ENCODE measurements at regions of chr11 and their contacts with region 1.

Region 1: DNA sequence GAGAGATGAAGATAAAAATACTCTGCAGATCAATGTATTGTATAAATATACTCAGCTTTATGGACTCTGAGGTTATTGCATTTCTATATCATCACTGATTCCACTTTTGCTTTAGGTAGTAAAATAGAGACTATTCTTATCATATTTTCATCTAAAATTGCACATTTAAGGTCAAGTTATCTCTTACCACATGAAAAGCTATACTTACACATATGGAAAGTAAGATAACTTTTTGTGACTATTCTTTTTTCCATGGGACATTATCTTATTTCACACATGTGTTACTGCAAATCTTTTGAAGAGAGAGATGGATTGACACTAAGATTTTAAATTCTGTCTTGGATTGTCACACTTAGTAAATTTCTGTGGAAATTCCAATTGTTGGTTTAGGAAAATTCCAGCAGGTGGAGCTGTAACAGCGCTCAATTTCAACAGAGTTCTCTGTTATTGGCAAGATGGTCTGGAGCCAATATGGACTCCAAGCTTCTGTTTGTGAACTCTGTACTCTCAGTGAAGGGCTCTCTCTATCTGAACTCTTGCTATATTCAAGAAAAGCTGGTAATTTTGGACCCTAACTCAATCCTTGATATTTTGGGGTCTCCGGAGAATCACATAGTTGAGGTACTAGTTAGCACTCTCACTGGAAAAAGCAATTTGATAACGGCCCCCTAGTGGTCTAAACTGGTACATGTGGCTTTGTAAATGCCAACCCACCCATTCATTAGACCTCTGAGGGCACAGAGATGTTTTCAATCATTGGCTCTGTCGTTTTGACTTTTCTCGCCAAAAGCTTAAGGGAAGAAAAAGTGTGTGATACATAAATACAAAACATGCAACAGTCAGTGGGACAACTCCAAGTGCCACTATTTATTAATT is 429.7 kb downstream of the ETS1 start:
- DNase-seq: peak; percentile 25 to 73 (median 64)
- H3K4me3 ChIP-seq: peak overlapping the region; percentile 54
- H3K4me3 Mint-ChIP-seq: peak overlapping the region; percentile 44 to 92 (median 86)
- H3K27ac ChIP-seq: no peak overlapping the region
- H3K27ac Mint-ChIP-seq: peak overlapping the region in 6 of 8 donors; percentile 47 to 86 (median 74)
- H3K4me1 ChIP-seq: no peaks in the 10 kb centered on the region
- H3K4me1 Mint-ChIP-seq: peaks cover 6 to 10% (median 8%) of the 10 kb centered on the region in 3 donors
- H3K27me3 ChIP-seq: no peaks in the 10 kb centered on the region
- H3K27me3 Mint-ChIP-seq: peaks cover 0 to 1% of the 10 kb centered on the region in 2 donors

Region 2: GRCh38 chr11:128026596-128026995 is 131.1 kb before region 1 on chr11:
- CTCF ChIA-PET with region 1: interaction called, 43 read pairs
- POLR2A ChIA-PET with region 1: no interaction called
- DNase-seq: no peak
- H3K4me3 ChIP-seq: no peak overlapping the region
- H3K4me3 Mint-ChIP-seq: no peak overlapping the region
- H3K27ac ChIP-seq: no peak overlapping the region
- H3K27ac Mint-ChIP-seq: no peak overlapping the region
- H3K4me1 ChIP-seq: peaks cover 4% of the 10 kb centered on the region
- H3K4me1 Mint-ChIP-seq: peaks cover 0 to 3% (median 3%) of the 10 kb centered on the region in 3 donors
- H3K27me3 ChIP-seq: no peaks in the 10 kb centered on the region
- H3K27me3 Mint-ChIP-seq: peaks cover 0 to 12% of the 10 kb centered on the region in 2 donors

Region 3: GRCh38 chr11:128045094-128045725 is 112.5 kb before region 1 on chr11:
- CTCF ChIA-PET with region 1: interaction called, 69 read pairs
- POLR2A ChIA-PET with region 1: interaction called, 10 read pairs
- DNase-seq: no peak
- H3K4me3 ChIP-seq: no peak overlapping the region
- H3K4me3 Mint-ChIP-seq: peak overlapping the region in 6 of 7 donors; percentile 2 to 66 (median 37)
- H3K27ac ChIP-seq: no peak overlapping the region
- H3K27ac Mint-ChIP-seq: peak overlapping the region in 7 of 8 donors; percentile 35 to 78 (median 47)
- H3K4me1 ChIP-seq: peaks cover 61% of the 10 kb centered on the region
- H3K4me1 Mint-ChIP-seq: peaks cover 67 to 78% (median 77%) of the 10 kb centered on the region in 3 donors
- H3K27me3 ChIP-seq: no peaks in the 10 kb centered on the region
- H3K27me3 Mint-ChIP-seq: peaks cover 0 to 2% of the 10 kb centered on the region in 2 donors

Region 4: DNA sequence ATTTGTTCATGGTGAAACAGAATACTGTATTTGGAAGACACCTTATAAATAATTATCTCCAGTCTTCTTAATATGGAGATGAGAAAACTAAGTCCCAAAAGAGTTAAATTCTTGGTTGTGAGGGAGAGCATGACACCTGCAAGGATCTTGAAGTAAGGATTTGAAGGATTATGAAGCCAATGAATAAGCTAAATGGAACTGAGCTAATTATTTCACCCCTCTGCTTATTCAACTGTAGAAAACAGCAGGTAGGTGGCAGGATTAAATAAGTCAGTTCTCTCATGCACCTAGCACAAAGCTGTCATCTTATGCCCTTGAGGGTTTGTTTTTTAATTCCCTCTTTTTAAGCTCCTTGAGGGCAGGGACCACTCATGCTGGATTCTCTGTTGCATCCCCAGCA is 27.6 kb before region 1 on chr11:
- CTCF ChIA-PET with region 1: interaction called, 10 read pairs
- POLR2A ChIA-PET with region 1: no interaction called
- DNase-seq: no peak
- H3K4me3 ChIP-seq: no peak overlapping the region
- H3K4me3 Mint-ChIP-seq: no peak overlapping the region
- H3K27ac ChIP-seq: no peak overlapping the region
- H3K27ac Mint-ChIP-seq: no peak overlapping the region
- H3K4me1 ChIP-seq: no peaks in the 10 kb centered on the region
- H3K4me1 Mint-ChIP-seq: peaks cover 3 to 18% (median 9%) of the 10 kb centered on the region in 3 donors
- H3K27me3 ChIP-seq: no peaks in the 10 kb centered on the region
- H3K27me3 Mint-ChIP-seq: no peaks in the 10 kb centered on the region

Region 5: DNA sequence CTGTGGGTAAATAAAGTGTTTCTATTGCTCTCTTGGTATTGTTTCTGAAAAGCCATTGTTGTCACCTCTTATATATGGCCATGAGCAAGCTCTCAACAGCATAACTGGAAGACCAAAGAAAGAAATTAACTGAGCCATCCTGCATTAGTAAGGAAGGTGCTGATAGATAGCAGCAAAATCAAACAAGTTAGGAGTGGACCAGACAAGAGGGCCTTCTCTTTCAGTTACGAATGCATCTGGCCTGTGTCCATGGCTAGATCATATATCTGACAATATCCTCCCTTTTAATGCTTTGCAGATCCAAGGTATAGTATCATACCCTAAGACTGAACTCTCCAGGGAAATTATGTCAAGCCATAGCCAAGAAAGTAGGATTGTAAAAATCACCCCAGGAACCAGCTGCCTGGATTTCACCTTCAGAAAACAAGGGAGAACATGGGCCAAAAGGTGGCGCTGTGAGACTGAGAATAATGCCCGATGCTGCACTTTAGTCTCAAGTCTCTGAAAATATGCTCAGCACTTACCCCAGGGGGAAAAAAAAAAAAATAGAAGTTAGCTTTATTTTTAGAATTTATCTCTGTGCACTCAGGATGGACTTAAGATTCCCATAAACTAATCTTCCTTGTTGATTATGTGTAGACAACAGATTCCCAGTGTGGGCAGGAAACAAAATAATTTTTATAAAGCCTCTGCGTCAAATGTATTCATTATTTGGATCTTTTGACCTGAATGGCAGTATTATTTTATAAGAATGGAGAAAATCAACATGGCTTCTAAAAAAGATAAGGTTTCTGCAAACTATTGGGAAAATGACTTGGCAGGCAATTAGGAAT is 14.6 kb after region 1 on chr11:
- CTCF ChIA-PET with region 1: interaction called, 28 read pairs
- POLR2A ChIA-PET with region 1: no interaction called
- DNase-seq: peak; percentile 67 to 86 (median 76)
- H3K4me3 ChIP-seq: no peak overlapping the region
- H3K4me3 Mint-ChIP-seq: no peak overlapping the region
- H3K27ac ChIP-seq: no peak overlapping the region
- H3K27ac Mint-ChIP-seq: peak overlapping the region in 2 of 8 donors; percentile 57 to 90
- H3K4me1 ChIP-seq: no peaks in the 10 kb centered on the region
- H3K4me1 Mint-ChIP-seq: peaks cover 0 to 6% (median 3%) of the 10 kb centered on the region in 3 donors
- H3K27me3 ChIP-seq: no peaks in the 10 kb centered on the region
- H3K27me3 Mint-ChIP-seq: no peaks in the 10 kb centered on the region

Region 6: DNA sequence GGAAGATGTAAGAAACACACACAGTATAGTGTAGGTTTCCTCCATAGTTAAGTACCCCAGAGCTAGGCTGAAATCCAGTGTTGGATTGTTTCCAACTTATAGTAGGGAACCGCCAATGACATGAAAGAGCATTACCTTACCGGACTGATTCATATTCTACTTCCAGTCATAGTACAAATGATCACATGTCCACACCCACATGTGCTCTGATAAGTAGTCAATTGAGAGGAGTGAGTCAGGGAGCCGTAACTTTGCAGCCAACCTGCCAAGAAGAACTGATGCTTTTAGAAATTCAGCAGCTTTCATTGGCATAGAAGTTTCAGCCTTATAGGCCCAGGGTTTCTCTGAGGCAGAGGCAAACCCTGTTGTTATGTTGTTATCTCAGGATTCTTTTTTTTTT is 189.1 kb after region 1 on chr11:
- CTCF ChIA-PET with region 1: no interaction called
- POLR2A ChIA-PET with region 1: no interaction called
- DNase-seq: no peak
- H3K4me3 ChIP-seq: no peak overlapping the region
- H3K4me3 Mint-ChIP-seq: peak overlapping the region in 1 of 7 donors; percentile 15
- H3K27ac ChIP-seq: no peak overlapping the region
- H3K27ac Mint-ChIP-seq: peak overlapping the region; percentile 37 to 92 (median 80)
- H3K4me1 ChIP-seq: peaks cover 67% of the 10 kb centered on the region
- H3K4me1 Mint-ChIP-seq: peaks cover 58 to 87% (median 86%) of the 10 kb centered on the region in 3 donors
- H3K27me3 ChIP-seq: no peaks in the 10 kb centered on the region
- H3K27me3 Mint-ChIP-seq: no peaks in the 10 kb centered on the region

Region 7: DNA sequence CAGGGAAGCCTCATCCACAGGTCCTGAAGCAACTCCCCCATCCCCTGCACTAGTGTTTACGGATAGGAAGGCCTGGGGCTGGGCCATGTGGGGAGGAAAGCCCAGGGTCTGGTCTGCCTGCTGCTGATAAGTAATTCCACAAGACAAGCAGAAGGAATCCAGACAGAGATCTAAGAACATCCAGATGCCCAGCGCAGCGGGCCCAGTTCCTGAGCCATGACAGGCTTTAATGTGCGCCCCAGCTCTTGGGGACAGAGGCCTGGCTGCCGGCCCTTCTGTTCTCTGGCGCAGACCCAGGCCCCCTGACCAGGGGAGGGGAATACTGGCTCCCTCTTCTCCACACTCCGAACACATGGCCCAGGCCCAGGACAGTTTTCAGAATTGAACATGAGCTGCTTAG is 458.5 kb after region 1 on chr11:
- CTCF ChIA-PET with region 1: no interaction called
- POLR2A ChIA-PET with region 1: no interaction called
- DNase-seq: no peak
- H3K4me3 ChIP-seq: no peak overlapping the region
- H3K4me3 Mint-ChIP-seq: no peak overlapping the region
- H3K27ac ChIP-seq: no peak overlapping the region
- H3K27ac Mint-ChIP-seq: peak overlapping the region in 1 of 8 donors; percentile 72
- H3K4me1 ChIP-seq: peaks cover 13% of the 10 kb centered on the region
- H3K4me1 Mint-ChIP-seq: peaks cover 36 to 43% (median 42%) of the 10 kb centered on the region in 3 donors
- H3K27me3 ChIP-seq: no peaks in the 10 kb centered on the region
- H3K27me3 Mint-ChIP-seq: peaks cover 0 to 2% of the 10 kb centered on the region in 2 donors

Region 8: GRCh38 chr11:128848815-128849455 is 691.3 kb after region 1 on chr11:
- CTCF ChIA-PET with region 1: interaction called, 10 read pairs
- POLR2A ChIA-PET with region 1: no interaction called
- DNase-seq: peak; percentile 33 to 77 (median 60)
- H3K4me3 ChIP-seq: no peak overlapping the region
- H3K4me3 Mint-ChIP-seq: peak overlapping the region in 1 of 7 donors; percentile 12
- H3K27ac ChIP-seq: no peak overlapping the region
- H3K27ac Mint-ChIP-seq: peak overlapping the region in 2 of 8 donors; percentile 40
- H3K4me1 ChIP-seq: peaks cover 27% of the 10 kb centered on the region
- H3K4me1 Mint-ChIP-seq: peaks cover 19 to 43% (median 38%) of the 10 kb centered on the region in 3 donors
- H3K27me3 ChIP-seq: no peaks in the 10 kb centered on the region
- H3K27me3 Mint-ChIP-seq: peaks cover 0 to 4% of the 10 kb centered on the region in 2 donors